ENCODE measurements at regions of chr10 and their contacts with region 1.

Region 1: GRCh38 chr10:126017961-126018560 is 121.7 kb downstream of the FANK1 start:
- DNase-seq: no peak
- ATAC-seq: no peak
- H3K4me3 ChIP-seq: no peak overlapping the region
- H3K27ac ChIP-seq: no peak overlapping the region
- H3K4me1 ChIP-seq: peaks cover 10% of the 10 kb centered on the region
- H3K27me3 ChIP-seq: no peaks in the 10 kb centered on the region
- CTCF ChIP-seq: no peak

Region 2: GRCh38 chr10:125976960-125977603 is 41.0 kb before region 1 on chr10:
- CTCF ChIA-PET with region 1: no interaction called
- POLR2A ChIA-PET with region 1: interaction called, 11 read pairs
- in situ Hi-C with region 1: no loop called
- intact Hi-C with region 1: no loop called
- DNase-seq: no peak
- ATAC-seq: no peak
- H3K4me3 ChIP-seq: no peak overlapping the region
- H3K27ac ChIP-seq: no peak overlapping the region
- H3K4me1 ChIP-seq: 0 out of 2 replicates have a peak, but pooled peaks cover 3% of the 10 kb centered on the region
- H3K27me3 ChIP-seq: no peaks in the 10 kb centered on the region
- CTCF ChIP-seq: peak; percentile 67

Region 3: DNA sequence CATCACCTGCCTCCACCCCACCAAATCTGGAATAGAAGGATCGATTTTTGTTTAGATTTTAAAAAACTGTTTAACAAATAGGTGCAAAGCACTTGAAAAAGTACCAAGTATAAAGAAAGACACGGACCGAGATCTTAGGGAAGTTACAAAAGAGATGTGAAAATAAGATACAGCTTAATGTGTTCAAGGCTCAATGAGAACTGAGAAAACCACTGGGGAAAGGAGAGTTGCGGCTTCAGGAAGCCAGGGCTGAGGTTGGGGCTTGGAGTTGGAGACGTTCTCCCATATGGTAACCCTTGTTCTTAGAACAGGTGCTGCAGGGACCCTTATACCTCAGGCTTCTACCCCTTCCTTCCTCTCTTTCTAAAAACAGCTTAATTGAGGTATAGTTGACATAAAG is 18.5 kb after region 1 on chr10:
- CTCF ChIA-PET with region 1: no interaction called
- POLR2A ChIA-PET with region 1: no interaction called
- in situ Hi-C with region 1: no loop called
- intact Hi-C with region 1: no loop called
- DNase-seq: no peak
- ATAC-seq: no peak
- H3K4me3 ChIP-seq: no peak overlapping the region
- H3K27ac ChIP-seq: no peak overlapping the region
- H3K4me1 ChIP-seq: no peaks in the 10 kb centered on the region
- H3K27me3 ChIP-seq: no peaks in the 10 kb centered on the region
- CTCF ChIP-seq: no peak

Measured in Panc1 (cell line).